Calu3 (cell line): ENCODE measurements at regions of chr17 and their contacts with region 1.

Region 1: DNA sequence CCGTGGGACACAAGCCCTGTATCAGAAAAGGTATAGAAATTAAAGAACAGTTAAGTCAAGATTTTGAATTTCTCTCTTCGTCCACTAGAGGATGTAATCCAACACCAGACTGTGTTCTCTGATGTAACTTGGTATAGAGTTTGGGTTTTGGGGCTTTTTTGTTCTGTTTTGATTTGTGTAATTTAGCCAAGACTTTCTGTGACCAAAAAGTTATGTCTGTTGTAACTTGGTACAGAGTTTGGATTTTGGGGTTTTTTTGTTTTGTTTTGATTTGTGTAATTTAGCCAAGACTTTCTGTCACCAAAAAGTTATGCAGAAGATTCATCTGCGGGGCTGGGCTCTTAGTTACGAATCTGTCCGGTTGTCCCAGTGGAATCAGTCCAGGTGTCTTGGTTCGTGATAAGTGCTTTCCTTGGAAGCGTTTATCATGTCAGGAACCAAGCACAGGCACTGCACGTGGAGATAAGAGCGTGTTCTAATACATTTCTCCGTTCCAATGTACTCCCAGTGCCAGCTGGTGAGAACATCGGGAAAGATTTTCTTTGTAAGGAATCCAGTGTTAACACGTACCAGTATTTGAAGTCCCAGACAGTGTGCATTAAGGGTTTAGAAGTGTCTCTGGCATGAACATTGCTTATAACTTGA is 44.1 kb upstream of the SEC14L1 start:
- DNase-seq: no peak
- H3K4me3 Mint-ChIP-seq: no peak overlapping the region
- H3K27ac Mint-ChIP-seq: no peak overlapping the region
- H3K4me1 Mint-ChIP-seq: peaks cover 15% of the 10 kb centered on the region
- H3K27me3 Mint-ChIP-seq: no peaks in the 10 kb centered on the region
- CTCF ChIP-seq: peak; percentile 39

Region 2: DNA sequence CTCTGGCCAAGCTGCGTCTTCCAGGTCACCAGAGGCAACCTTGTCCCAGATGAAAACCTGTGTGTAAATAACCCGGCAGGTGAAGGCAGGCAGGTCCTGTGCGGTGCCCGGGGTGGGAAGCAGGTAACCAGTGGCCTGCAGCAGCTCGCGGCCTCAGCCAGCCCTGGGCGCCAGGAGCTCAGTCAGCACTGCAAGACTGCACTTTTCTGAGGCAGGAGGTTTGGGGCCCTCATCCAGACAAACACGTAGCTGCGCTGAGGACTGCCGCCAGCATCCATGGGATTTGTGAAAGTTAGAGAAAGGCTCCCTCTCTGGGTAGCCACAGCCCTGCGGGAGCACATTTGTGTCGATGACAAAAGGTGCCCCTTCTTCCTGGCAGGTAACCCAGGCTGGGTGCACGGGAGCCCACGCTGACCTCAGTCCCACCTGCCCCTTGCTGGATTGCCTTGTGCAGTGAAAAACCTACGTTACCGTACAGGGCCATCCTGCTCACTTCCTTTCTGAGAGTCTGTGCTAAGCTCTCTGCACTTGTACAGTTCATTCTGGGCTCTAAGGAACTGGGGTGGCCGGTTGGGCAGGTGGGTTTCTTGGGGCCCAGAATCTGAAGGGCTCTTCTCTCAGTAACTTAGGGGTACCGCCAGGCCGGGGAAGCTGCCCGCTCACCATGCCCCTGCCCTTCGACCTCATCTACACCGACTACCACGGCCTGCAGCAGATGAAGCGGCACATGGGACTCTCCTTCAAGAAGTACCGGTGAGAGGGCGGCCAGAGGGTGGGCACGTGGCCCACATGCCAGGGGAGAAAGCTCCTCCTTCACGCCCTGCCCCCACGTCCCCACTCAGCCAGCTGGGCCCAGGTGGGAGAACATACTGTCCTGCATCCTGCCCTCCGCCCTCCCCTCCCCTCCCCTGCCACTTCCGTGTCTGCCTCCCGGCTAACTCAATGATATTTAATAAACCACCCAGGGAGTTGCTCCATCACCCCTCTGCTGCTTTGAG is 172.0 kb before region 1 on chr17:
- CTCF ChIA-PET with region 1: no interaction called
- intact Hi-C with region 1: no loop called
- DNase-seq: no peak
- H3K4me3 Mint-ChIP-seq: no peak overlapping the region
- H3K27ac Mint-ChIP-seq: no peak overlapping the region
- H3K4me1 Mint-ChIP-seq: no peaks in the 10 kb centered on the region
- H3K27me3 Mint-ChIP-seq: peaks cover 83% of the 10 kb centered on the region
- CTCF ChIP-seq: no peak

Region 3: GRCh38 chr17:77140166-77140878 is 43.6 kb after region 1 on chr17:
- CTCF ChIA-PET with region 1: interaction called, 3 read pairs
- intact Hi-C with region 1: loop called (anchors 10 kb)
- DNase-seq: peak; percentile 99
- H3K4me3 Mint-ChIP-seq: peak overlapping the region; percentile 74
- H3K27ac Mint-ChIP-seq: peak overlapping the region; percentile 64
- H3K4me1 Mint-ChIP-seq: peaks cover 20% of the 10 kb centered on the region
- H3K27me3 Mint-ChIP-seq: no peaks in the 10 kb centered on the region
- CTCF ChIP-seq: no peak

Region 4: DNA sequence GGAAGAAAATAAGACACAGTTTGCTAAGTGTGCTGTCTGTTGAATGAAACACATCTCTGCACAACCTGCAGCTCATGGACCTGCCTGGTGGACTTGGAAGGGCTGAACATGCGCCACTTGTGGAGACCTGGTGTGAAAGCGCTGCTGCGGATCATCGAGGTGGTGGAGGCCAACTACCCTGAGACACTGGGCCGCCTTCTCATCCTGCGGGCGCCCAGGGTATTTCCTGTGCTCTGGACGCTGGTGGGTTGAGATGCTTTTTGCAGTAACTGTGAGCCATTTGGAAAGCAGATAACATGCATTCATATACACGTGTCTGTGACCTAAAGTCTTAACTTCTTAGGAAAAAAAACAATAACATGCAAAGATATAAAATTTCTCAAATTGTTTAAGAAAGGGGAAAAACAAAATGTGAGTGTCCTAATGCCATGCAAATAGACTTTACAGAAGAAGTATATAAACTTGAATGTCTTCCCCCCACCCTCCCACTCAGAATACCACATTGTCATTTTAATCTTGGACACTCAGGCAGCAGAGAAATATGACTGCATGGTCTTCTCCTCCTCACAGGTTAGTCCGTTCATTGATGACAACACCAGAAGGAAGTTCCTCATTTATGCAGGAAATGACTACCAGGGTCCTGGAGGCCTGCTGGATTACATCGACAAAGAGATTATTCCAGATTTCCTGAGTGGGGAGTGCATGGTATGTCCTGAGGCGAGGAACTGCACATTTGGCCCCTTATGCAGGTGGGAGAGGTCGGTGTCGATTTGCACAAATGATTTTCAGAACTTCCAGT is 109.7 kb after region 1 on chr17:
- CTCF ChIA-PET with region 1: no interaction called
- intact Hi-C with region 1: no loop called
- DNase-seq: no peak
- H3K4me3 Mint-ChIP-seq: no peak overlapping the region
- H3K27ac Mint-ChIP-seq: no peak overlapping the region
- H3K4me1 Mint-ChIP-seq: no peaks in the 10 kb centered on the region
- H3K27me3 Mint-ChIP-seq: no peaks in the 10 kb centered on the region
- CTCF ChIP-seq: no peak